ENCODE measurements at regions of chr3 and their contacts with region 1.

Region 1: DNA sequence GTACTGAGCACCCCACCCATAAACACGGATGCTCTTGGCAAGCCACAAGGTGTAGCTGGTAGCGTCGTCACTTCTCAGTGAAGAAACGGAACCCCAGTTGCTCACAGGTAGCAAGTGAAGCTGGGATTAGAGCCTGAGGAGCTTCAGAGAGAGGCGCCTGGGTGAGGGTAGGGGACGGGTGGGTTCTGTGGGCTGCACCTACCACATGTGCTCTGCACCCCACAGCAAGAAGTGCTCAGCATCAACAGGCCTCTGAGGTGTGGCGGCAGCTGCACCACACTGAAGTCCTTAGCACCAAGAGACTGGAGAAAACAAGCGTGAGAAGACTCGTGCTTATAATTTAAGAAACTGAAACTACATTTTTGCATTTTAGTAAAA is 9.8 kb downstream of the MAP6D1 start:
- DNase-seq: peak; percentile 64
- H3K4me3 ChIP-seq: peak overlapping the region; percentile 33
- H3K27ac ChIP-seq: peak overlapping the region; percentile 71
- H3K4me1 ChIP-seq: peaks cover 24% of the 10 kb centered on the region
- CTCF ChIP-seq: no peak

Region 2: GRCh38 chr3:183502237-183503181 is 313.0 kb before region 1 on chr3:
- CTCF ChIA-PET with region 1: no interaction called
- POLR2A ChIA-PET with region 1: no interaction called
- intact Hi-C with region 1: no loop called
- DNase-seq: no peak
- H3K4me3 ChIP-seq: no peak overlapping the region
- H3K27ac ChIP-seq: no peak overlapping the region
- H3K4me1 ChIP-seq: peaks cover 20% of the 10 kb centered on the region
- CTCF ChIP-seq: no peak

Region 3: DNA sequence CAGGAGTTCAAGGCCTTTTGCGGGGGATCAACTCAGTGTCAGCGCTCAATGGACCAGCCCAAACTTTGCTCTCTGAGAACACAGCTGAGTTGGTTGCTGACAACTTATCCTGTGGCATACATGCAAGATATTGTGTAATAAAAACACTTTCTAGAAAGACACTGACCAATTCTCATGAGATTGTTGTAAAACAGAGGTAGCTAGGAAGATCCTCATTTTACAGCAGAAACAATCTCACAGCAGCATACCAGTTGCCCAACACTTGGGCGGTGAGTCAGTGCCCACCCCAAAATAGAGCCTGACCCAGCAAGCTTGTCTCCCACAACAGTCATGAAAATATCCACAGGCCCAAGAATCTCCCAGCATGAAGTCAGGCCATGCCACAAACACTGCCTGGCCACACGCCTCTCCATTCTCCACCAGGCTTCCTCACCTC is 278.2 kb before region 1 on chr3:
- CTCF ChIA-PET with region 1: no interaction called
- POLR2A ChIA-PET with region 1: no interaction called
- intact Hi-C with region 1: no loop called
- DNase-seq: no peak
- H3K4me3 ChIP-seq: peak overlapping the region; percentile 57
- H3K27ac ChIP-seq: peak overlapping the region; percentile 74
- H3K4me1 ChIP-seq: peaks cover 98% of the 10 kb centered on the region
- CTCF ChIP-seq: no peak

Region 4: GRCh38 chr3:183794452-183794851 is 21.1 kb before region 1 on chr3:
- CTCF ChIA-PET with region 1: no interaction called
- POLR2A ChIA-PET with region 1: interaction called, 10 read pairs
- intact Hi-C with region 1: no loop called
- DNase-seq: no peak
- H3K4me3 ChIP-seq: no peak overlapping the region
- H3K27ac ChIP-seq: no peak overlapping the region
- H3K4me1 ChIP-seq: no peaks in the 10 kb centered on the region
- CTCF ChIP-seq: no peak

Measured in OCI-LY7 (cell line).